Prostate gland (tissue), 2 donors: ENCODE measurements at regions of chr9 and their contacts with region 1.

Region 1: GRCh38 chr9:91681461-91682305 is 258.1 kb upstream of the NFIL3 start:
- DNase-seq: peak; percentile 54
- H3K4me3 ChIP-seq: no peak overlapping the region
- H3K27ac ChIP-seq: no peak overlapping the region
- H3K4me1 ChIP-seq: peaks cover 5% of the 10 kb centered on the region
- H3K27me3 ChIP-seq: no peaks in the 10 kb centered on the region
- CTCF ChIP-seq: peak; percentile 27 to 82 (median 65)
- POLR2A ChIP-seq: no peak

Region 2: GRCh38 chr9:91036826-91037510 is 644.7 kb before region 1 on chr9:
- intact Hi-C with region 1: loop called (anchors 5 kb)
- DNase-seq: peak; percentile 86
- H3K4me3 ChIP-seq: no peak overlapping the region
- H3K27ac ChIP-seq: peak overlapping the region; percentile 17 to 42
- H3K4me1 ChIP-seq: no peaks in the 10 kb centered on the region
- H3K27me3 ChIP-seq: no peaks in the 10 kb centered on the region
- CTCF ChIP-seq: peak in 3 of 4 experiments; percentile 61 to 81 (median 74)
- POLR2A ChIP-seq: no peak

Region 3: DNA sequence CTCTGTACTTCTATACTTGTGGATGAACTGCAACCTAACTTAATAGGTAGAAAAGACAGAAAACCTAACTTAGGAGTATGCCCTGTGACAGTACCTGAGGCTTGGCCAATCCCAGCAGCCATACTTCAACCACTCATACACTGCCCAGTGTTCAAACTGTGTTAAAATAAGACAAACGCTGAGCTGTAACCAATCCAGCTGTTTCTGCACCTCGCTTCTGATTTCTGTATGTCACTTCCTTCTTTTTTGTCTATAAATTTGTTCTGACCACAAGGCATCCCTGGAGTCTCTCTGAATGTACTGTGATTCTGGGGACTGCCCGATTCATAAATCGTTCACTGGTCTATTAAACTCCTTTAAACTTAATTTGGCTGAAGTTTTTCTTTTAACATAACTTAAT is 361.4 kb before region 1 on chr9:
- intact Hi-C with region 1: no loop called
- DNase-seq: no peak
- H3K4me3 ChIP-seq: no peak overlapping the region
- H3K27ac ChIP-seq: no peak overlapping the region
- H3K4me1 ChIP-seq: no peaks in the 10 kb centered on the region
- H3K27me3 ChIP-seq: no peaks in the 10 kb centered on the region
- CTCF ChIP-seq: no peak
- POLR2A ChIP-seq: no peak

Region 4: GRCh38 chr9:91433180-91433579 is 248.5 kb before region 1 on chr9:
- intact Hi-C with region 1: loop called (anchors 10 kb)
- DNase-seq: peak; percentile 36
- H3K4me3 ChIP-seq: no peak overlapping the region
- H3K27ac ChIP-seq: no peak overlapping the region
- H3K4me1 ChIP-seq: no peaks in the 10 kb centered on the region
- H3K27me3 ChIP-seq: no peaks in the 10 kb centered on the region
- CTCF ChIP-seq: peak in 3 of 4 experiments; percentile 36 to 62 (median 39)
- POLR2A ChIP-seq: no peak